ENCODE measurements at regions of chr1 and their contacts with region 1.

Region 1: DNA sequence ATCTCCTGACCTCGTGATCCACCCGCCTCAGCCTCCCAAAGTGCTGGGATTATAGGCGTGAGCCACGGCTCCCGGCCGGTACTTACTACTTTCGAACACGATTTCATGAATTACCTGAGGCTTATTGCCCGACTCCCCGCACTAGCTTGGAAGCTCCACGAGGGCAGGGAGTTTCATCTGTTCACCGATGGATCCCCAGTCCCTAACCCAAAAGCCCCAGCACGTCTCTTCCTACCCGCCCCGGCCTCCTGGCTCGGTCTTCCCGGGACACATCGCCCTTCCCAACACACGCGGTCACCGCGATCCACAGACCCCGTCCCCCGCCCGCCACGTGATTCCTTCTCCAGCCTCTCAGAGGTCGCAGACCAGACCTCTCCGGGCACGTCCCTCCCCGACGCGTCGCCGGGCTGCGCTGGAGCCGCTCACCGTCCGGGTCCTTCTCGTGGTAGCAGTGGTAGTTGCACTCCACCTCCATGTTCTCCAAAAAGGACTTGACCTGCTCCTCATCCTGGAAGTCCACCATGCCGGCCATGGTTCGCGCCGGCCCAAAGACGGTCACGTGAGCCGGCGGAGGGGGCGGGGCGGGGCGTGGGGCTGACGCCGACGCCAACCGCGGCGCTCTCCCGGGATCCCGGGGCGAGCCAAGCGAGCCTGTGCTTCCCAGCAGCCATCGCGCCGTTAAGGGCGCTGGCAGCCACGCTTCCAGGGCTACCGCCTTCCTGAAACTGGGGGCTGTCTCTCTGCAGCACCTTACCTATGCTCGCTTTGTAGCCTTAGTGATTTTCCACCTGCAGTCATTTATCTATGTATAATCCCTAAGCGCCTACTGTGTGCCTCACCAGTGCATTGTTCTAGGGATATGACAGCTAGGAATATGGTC is at the start of gene COA7:
- DNase-seq: peak; percentile 90 to 94
- ATAC-seq: peak; percentile 85 to 89 (median 88)
- H3K4me3 ChIP-seq: peak within 1 kb of the TSS; percentile 71
- H3K27ac ChIP-seq: peak within 1 kb of the TSS; percentile 93
- H3K4me1 ChIP-seq: peaks cover 11% of the 10 kb centered on the region
- H3K27me3 ChIP-seq: no peaks in the 10 kb centered on the region
- CTCF ChIP-seq: no peak
- total RNA-seq, gene COA7: 25.2 to 48.8 (median 38.7) TPM

Region 2: GRCh38 chr1:52726265-52727113 is 28.5 kb after region 1 on chr1 and contains the start of gene ZYG11B:
- intact Hi-C with region 1: loop called in 1 of 2 experiments (anchors 2 kb)
- DNase-seq: peak; percentile 90 to 96
- ATAC-seq: peak; percentile 97 to 99 (median 98)
- H3K4me3 ChIP-seq: peak within 1 kb of the TSS; percentile 96
- H3K27ac ChIP-seq: peak within 1 kb of the TSS; percentile 95
- H3K4me1 ChIP-seq: peaks cover 30% of the 10 kb centered on the region
- H3K27me3 ChIP-seq: no peaks in the 10 kb centered on the region
- CTCF ChIP-seq: no peak
- total RNA-seq, gene ZYG11B: 72.0 to 152 (median 97.1) TPM

Region 3: GRCh38 chr1:52798331-52798730 is 100.3 kb after region 1 on chr1:
- intact Hi-C with region 1: no loop called
- DNase-seq: no peak
- ATAC-seq: no peak
- H3K4me3 ChIP-seq: no peak overlapping the region
- H3K27ac ChIP-seq: no peak overlapping the region
- H3K4me1 ChIP-seq: no peaks in the 10 kb centered on the region
- H3K27me3 ChIP-seq: no peaks in the 10 kb centered on the region
- CTCF ChIP-seq: no peak